ENCODE measurements at regions of chr20 and their contacts with region 1.

Region 1: GRCh38 chr20:19815553-19815991 is 57.5 kb downstream of the RIN2 start:
- DNase-seq: peak; percentile 93
- ATAC-seq: peak; percentile 100
- H3K4me3 ChIP-seq: no peak overlapping the region
- H3K27ac ChIP-seq: peak overlapping the region; percentile 86
- H3K4me1 ChIP-seq: peaks cover 26% of the 10 kb centered on the region
- H3K27me3 ChIP-seq: no peaks in the 10 kb centered on the region
- CTCF ChIP-seq: peak; percentile 44; the same call in 1 of the 2 replicates

Region 2: GRCh38 chr20:19802492-19803158 is 12.9 kb before region 1 on chr20:
- CTCF ChIA-PET with region 1: no interaction called
- POLR2A ChIA-PET with region 1: interaction called, 20 read pairs
- in situ Hi-C with region 1: no loop called
- intact Hi-C with region 1: no loop called
- DNase-seq: no peak
- ATAC-seq: peak; percentile 92
- H3K4me3 ChIP-seq: no peak overlapping the region
- H3K27ac ChIP-seq: 0 out of 2 replicates have a peak overlapping the region, but pooled peaks have one; percentile 6
- H3K4me1 ChIP-seq: peaks cover 9% of the 10 kb centered on the region
- H3K27me3 ChIP-seq: no peaks in the 10 kb centered on the region
- CTCF ChIP-seq: peak; percentile 63

Measured in Panc1 (cell line).